Breast epithelium (tissue), 4 donors: ENCODE measurements at regions of chr10 and their contacts with region 1.

Region 1: GRCh38 chr10:96846396-96846795 is 14.3 kb downstream of the LCOR start:
- DNase-seq: no peak
- H3K4me3 ChIP-seq: no peak overlapping the region
- H3K27ac ChIP-seq: no peak overlapping the region
- H3K4me1 ChIP-seq: peaks cover 0 to 6% of the 10 kb centered on the region in 2 donors
- H3K27me3 ChIP-seq: no peaks in the 10 kb centered on the region
- CTCF ChIP-seq: no peak
- POLR2A ChIP-seq: no peak

Region 2: DNA sequence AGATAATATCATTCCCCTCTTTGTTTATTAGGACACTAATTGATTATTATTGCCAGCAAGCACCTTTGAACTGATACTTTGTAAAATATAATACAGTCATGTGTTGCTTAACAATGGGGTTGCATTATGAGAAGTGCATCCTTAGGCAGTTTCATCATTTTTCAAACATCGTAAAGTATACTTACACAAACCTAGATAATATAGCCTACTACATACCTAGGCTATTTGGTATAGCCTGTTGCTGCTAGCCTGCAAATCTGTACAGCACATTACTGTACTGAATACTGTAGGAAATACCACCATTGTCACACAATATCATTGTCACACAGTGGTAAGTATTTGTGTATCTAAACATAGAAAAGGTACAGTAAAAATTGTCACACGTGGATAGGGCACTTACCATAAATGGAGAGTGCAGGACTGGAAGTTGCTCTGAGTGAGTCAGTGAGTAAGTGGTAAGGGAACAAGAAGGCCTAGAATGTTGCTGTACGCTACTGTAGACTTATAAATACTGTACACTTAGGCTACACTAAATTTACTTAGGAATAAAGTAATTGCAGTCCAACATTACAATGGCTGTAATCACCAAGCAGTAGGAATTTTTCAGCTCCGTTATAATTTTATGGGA is 56.4 kb after region 1 on chr10:
- intact Hi-C with region 1: no loop called
- DNase-seq: no peak
- H3K4me3 ChIP-seq: no peak overlapping the region
- H3K27ac ChIP-seq: no peak overlapping the region
- H3K4me1 ChIP-seq: no peaks in the 10 kb centered on the region
- H3K27me3 ChIP-seq: no peaks in the 10 kb centered on the region
- CTCF ChIP-seq: no peak
- POLR2A ChIP-seq: no peak

Region 3: GRCh38 chr10:97267671-97268070 is 421.3 kb after region 1 on chr10:
- intact Hi-C with region 1: loop called (anchors 5 kb)
- DNase-seq: no peak
- H3K4me3 ChIP-seq: no peak overlapping the region
- H3K27ac ChIP-seq: no peak overlapping the region
- H3K4me1 ChIP-seq: no peaks in the 10 kb centered on the region
- H3K27me3 ChIP-seq: no peaks in the 10 kb centered on the region
- CTCF ChIP-seq: no peak
- POLR2A ChIP-seq: no peak

Region 4: GRCh38 chr10:97686962-97687784 is 840.8 kb after region 1 on chr10 and contains the start of gene AVPI1:
- intact Hi-C with region 1: no loop called
- DNase-seq: peak; percentile 98
- H3K4me3 ChIP-seq: peak within 1 kb of the TSS; percentile 66 to 89 (median 71)
- H3K27ac ChIP-seq: peak within 1 kb of the TSS; percentile 92 to 97
- H3K4me1 ChIP-seq: peaks cover 10 to 20% of the 10 kb centered on the region in 2 donors
- H3K27me3 ChIP-seq: no peaks in the 10 kb centered on the region
- CTCF ChIP-seq: no peak
- POLR2A ChIP-seq: peak; percentile 85
- total RNA-seq, gene AVPI1: 23.9 to 42.4 (median 39.0) TPM

Region 5: GRCh38 chr10:98758463-98758862 is 1912.1 kb after region 1 on chr10:
- intact Hi-C with region 1: no loop called
- DNase-seq: no peak
- H3K4me3 ChIP-seq: no peak overlapping the region
- H3K27ac ChIP-seq: no peak overlapping the region
- H3K4me1 ChIP-seq: no peaks in the 10 kb centered on the region
- H3K27me3 ChIP-seq: no peaks in the 10 kb centered on the region
- CTCF ChIP-seq: no peak
- POLR2A ChIP-seq: no peak